ENCODE measurements at regions of chr1 and their contacts with region 1.

Region 1: DNA sequence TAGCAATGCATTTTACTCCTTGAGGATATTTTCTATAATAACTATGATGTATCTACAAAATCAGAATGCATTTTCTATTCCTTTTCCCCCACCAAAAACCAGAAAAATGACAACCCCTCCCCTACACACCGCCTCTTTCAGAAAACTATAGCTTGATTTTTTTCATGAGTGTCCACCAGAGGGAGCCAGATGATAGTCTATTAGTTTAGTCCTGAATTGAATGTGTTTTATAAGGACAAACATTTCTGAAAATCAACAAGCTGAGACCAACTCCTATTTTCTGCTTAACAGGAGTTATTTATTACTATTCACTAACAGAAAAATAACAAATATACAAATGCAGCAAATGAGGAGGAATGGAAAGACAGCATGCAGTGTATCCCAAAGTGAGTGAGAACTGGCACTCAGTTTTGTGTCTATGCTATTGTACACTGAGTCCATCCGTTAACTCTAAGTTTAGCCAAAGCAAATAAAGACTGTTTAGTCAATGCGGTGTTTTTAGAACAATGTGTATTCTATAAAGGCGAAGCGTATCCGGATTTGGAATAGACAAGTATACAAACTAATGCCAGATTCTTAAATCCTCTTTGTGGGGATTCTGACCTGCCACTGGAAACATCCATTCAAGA is 182.6 kb downstream of the VAV3 start:
- DNase-seq: peak; percentile 35
- ATAC-seq: peak; percentile 45
- H3K4me3 Mint-ChIP-seq: no peak overlapping the region
- H3K27ac Mint-ChIP-seq: no peak overlapping the region
- H3K4me1 Mint-ChIP-seq: peaks cover 26% of the 10 kb centered on the region
- H3K27me3 Mint-ChIP-seq: no peaks in the 10 kb centered on the region

Region 2: GRCh38 chr1:107795994-107796393 is 13.7 kb after region 1 on chr1:
- CTCF ChIA-PET with region 1: interaction called, 39 read pairs
- POLR2A ChIA-PET with region 1: no interaction called
- intact Hi-C with region 1: no loop called
- DNase-seq: peak; percentile 18
- ATAC-seq: peak; percentile 72
- H3K4me3 Mint-ChIP-seq: no peak overlapping the region
- H3K27ac Mint-ChIP-seq: peak overlapping the region; percentile 48
- H3K4me1 Mint-ChIP-seq: peaks cover 31% of the 10 kb centered on the region
- H3K27me3 Mint-ChIP-seq: no peaks in the 10 kb centered on the region

Region 3: GRCh38 chr1:107870696-107871095 is 88.4 kb after region 1 on chr1:
- CTCF ChIA-PET with region 1: interaction called, 8 read pairs
- POLR2A ChIA-PET with region 1: interaction called, 10 read pairs
- intact Hi-C with region 1: no loop called
- DNase-seq: no peak
- ATAC-seq: no peak
- H3K4me3 Mint-ChIP-seq: no peak overlapping the region
- H3K27ac Mint-ChIP-seq: no peak overlapping the region
- H3K4me1 Mint-ChIP-seq: peaks cover 29% of the 10 kb centered on the region
- H3K27me3 Mint-ChIP-seq: no peaks in the 10 kb centered on the region

Region 4: DNA sequence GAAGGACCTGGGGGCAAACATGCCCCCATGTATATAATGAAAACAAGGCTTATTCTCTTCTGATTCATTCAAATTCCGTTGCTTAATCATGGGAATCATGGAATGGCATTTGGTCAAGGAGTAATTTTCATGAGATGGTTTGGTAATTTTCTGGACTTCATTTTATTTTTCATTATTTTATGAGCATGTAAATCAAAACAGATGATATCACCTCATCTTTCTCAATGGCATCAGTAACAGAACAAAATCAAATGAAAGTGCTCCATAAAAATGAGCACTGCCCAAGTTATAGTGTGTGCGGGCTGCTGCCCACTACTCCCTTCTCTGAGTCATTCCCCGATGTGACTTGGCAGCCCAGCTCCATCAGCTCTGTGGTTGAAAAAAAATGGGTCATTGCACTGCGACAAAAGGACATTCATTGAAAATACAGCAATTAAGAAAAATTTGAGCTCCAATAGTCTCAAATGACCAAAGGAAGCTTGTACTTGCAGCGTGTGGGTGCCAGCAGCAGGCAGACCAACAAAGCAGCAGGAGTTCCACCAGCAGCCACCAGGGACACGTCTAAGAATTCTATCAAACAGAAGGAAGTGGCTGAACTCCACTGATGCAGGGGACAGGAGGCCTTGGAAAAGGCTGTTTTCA is 267.0 kb after region 1 on chr1:
- CTCF ChIA-PET with region 1: interaction called, 9 read pairs
- POLR2A ChIA-PET with region 1: no interaction called
- intact Hi-C with region 1: loop called (anchors 5 kb)
- DNase-seq: peak; percentile 51
- ATAC-seq: no peak
- H3K4me3 Mint-ChIP-seq: no peak overlapping the region
- H3K27ac Mint-ChIP-seq: no peak overlapping the region
- H3K4me1 Mint-ChIP-seq: peaks cover 20% of the 10 kb centered on the region
- H3K27me3 Mint-ChIP-seq: no peaks in the 10 kb centered on the region

Region 5: DNA sequence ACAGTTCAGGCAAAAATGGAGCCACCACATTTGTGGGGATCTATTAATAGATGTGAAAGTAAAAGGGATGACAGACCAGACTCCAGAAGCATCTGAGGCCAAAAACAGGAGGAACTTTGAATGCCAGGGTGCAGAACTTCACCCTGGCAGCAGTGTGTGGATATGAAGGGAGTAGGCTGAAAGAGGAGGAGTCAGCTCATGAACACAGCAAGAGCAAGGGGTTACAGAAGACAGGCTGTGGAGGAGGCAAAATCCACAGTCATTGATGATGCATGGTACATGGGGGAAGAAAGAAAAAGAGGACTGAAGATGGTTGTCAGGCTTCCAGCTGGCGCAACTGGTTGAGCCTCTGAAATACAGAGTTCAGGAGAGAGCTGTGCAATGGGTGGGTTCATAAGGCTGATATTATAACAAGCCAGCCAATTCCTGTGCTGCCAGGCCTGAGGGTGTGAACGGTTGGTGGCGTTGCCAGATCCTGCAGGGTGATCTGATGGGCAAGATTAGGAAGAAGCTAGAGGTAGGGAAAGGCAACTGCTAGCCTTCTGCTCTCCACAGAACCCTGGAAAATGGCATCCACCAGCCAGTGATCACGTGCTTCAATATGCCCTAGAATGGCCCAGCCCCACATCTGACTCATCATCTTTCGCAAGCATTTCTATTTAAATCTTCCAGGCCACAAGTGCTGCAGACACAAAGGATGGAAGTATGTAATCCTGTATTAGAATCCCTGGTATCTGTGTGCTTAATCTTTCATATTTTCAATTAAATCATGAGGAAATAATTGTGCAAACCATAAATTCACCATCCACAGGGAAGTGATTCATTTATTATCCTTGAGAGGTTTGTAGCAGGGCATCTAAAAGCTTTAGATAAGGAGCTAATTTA is 335.9 kb after region 1 on chr1:
- CTCF ChIA-PET with region 1: interaction called, 268 read pairs
- POLR2A ChIA-PET with region 1: no interaction called
- intact Hi-C with region 1: no loop called
- DNase-seq: peak; percentile 15
- ATAC-seq: no peak
- H3K4me3 Mint-ChIP-seq: no peak overlapping the region
- H3K27ac Mint-ChIP-seq: no peak overlapping the region
- H3K4me1 Mint-ChIP-seq: peaks cover 12% of the 10 kb centered on the region
- H3K27me3 Mint-ChIP-seq: peaks cover 4% of the 10 kb centered on the region

Region 6: DNA sequence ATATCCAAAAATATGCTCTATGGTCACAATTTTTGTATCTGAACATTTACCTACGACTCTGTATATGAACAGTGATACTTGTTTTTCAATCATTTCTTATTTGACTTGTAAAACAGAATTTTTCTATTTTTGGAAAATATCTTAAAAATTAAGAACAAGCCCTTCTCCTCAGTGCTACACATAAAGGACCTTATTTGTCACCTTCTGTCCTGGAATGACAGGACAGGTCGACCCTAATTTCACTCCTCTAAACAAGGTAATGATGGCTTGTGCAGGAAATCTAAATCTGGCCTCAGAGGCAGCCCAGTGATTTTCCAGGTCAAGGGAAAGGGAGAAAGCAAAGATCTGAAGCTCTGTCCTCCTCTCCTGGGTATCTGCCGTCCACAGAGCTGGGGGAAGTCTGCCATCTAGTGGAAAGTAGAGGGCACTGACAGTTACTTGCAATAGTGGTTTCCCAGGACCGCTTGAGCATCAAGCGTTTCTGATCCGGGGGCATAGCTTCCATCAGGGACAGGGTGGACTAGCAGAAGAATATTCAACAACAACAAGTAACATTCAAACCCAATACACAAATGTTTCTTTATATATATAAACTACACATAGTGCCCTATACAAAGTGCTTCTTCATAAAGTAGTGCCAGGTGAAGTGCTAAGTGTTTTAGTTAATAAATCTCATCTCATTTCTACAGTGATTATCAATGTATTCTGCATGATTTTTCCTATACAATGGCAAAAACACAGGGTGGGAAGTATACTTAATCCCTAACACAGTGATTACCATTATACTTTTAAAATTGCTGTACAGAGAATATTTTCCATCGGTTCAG is 343.2 kb after region 1 on chr1:
- CTCF ChIA-PET with region 1: interaction called, 268 read pairs
- POLR2A ChIA-PET with region 1: no interaction called
- intact Hi-C with region 1: loop called (anchors 1 kb)
- DNase-seq: peak; percentile 77
- ATAC-seq: peak; percentile 94
- H3K4me3 Mint-ChIP-seq: no peak overlapping the region
- H3K27ac Mint-ChIP-seq: no peak overlapping the region
- H3K4me1 Mint-ChIP-seq: peaks cover 2% of the 10 kb centered on the region
- H3K27me3 Mint-ChIP-seq: no peaks in the 10 kb centered on the region

Region 7: DNA sequence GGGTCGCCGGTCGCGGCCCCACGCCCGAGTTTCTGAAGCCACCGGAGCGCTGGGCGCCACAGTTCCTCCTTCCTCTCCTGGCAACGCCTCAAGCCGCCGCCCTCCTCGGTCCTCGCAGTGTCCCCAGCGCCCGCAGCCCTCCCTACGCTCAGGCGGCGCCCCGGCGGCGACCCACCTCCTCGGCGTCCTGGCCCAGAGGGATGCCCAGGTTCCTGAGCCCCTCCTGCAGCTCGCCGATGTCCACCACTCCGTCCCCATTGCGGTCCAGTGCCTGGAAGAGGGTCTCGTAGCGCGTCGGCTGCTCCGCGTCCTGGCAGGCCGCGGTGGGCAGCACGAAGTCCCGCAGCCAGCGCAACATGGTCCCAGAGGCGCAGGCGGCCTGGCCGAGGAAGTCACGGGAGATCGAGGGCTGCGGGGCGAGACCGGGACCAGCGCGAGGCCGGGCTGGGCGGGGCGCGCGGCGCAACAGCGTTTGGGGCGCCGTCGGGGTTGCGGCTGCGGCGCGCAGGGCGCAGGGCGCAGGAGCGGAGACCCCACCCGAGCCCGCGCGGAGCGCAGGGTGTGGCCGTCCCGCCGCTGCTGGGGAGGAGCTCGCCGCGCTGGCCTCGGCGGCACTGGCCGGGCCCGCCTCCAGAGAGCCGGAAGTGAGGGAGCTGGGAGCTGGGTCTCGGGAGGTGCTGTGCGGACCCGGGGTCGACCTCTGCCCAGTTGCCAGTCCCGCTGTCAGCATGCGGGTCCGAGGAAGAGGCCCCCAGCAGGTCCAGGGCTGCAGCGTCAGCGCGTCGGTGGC is 417.6 kb after region 1 on chr1 and contains the start of gene SLC25A24:
- CTCF ChIA-PET with region 1: interaction called, 4 read pairs
- POLR2A ChIA-PET with region 1: no interaction called
- intact Hi-C with region 1: loop called in 1 of 2 experiments (anchors 5 kb)
- DNase-seq: peak; percentile 86
- ATAC-seq: peak; percentile 97
- H3K4me3 Mint-ChIP-seq: peak within 1 kb of the TSS; percentile 84
- H3K27ac Mint-ChIP-seq: peak within 1 kb of the TSS; percentile 78
- H3K4me1 Mint-ChIP-seq: peaks cover 26% of the 10 kb centered on the region
- H3K27me3 Mint-ChIP-seq: no peaks in the 10 kb centered on the region
- total RNA-seq, gene SLC25A24: 13.6 to 15.4 TPM

Measured in activated CD4-positive, alpha-beta T cell treated with anti-CD3 and anti-CD28 coated beads for 36 hours (primary cell).